Left cardiac atrium (tissue), 4 donors: ENCODE measurements at regions of chr11 and their contacts with region 1.

Region 1: GRCh38 chr11:117443266-117444195 is 115.9 kb downstream of the CEP164 start:
- DNase-seq: peak; percentile 65
- ATAC-seq: peak; percentile 89 to 92

Region 2: GRCh38 chr11:117621226-117621625 is 177.7 kb after region 1 on chr11:
- intact Hi-C with region 1: loop called in 1 of 2 experiments (anchors 10 kb)
- DNase-seq: no peak
- ATAC-seq: no peak

Region 3: DNA sequence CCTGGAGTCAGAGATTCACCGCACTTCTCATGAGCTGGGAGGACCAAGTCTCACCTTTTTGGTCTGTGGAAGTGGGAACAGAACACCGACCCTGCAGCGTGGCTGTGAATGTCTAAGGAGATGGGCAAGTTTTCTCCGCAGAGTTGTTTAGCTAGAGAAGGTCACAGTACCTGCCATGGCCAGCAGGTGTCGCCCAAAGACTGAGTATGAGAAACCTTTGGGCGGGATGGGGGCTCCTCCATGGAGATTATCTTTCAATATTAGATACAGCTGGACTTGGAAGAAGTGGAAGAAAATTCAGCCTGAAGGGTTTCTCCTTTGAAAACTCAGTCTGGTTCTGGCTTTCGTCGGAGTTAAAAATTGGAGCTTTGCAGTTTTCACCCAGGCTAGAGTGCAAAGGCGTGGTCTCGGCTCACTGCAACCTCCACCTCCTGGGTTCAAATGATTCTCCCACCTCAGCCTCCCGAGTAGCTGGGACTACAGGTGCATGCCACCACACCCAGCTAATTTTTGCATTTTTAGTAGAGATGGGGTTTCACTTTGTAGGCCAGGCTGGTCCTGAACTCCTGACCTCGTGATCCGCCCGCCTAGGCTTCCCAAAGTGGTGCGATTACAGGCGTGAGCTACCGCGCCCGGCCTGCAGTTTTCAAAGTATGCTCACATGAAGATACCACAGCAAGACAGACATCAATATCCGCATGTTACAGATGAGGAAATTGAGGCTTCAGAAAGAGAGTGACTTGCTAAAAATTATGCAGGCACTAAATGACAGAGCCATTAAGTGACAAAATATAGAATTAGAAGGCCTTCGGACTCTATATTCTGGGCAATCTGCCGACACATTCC is 364.2 kb after region 1 on chr11:
- intact Hi-C with region 1: loop called in 1 of 2 experiments (anchors 1 kb)
- DNase-seq: peak; percentile 81
- ATAC-seq: peak; percentile 39 to 56

Region 4: DNA sequence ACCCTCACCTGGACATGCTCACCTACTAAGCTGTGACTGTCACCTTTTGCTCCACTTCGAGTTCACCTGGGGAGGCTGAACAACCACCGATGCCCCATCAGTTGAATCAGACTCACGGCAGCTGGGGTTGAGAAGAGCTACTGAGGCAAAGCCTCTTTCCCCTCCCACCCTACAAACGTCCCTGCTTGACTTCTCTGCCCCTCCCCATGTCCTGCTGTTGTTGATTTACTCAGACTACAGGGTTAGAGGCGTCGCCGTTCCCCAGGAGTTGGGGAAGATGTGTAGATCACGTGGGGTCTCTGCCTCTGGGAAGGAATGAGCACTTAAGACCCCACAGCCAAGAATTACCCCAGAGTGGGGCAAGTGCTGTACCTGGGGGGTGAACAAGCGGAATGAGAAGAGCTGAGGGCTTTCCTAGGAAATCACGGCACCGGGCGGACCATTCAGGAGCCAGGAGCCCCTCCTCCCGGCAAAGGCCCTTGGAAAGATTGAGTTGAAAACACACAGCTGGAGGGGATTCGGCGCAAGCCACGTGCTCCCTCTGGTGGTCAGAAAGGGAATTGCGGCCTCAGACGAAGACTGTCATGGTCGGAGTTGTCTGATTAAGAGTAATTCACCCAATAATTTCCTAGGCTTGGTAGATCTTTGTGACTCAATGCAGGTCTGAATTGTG is 374.0 kb after region 1 on chr11:
- intact Hi-C with region 1: loop called in 1 of 2 experiments (anchors 5 kb)
- DNase-seq: peak; percentile 84
- ATAC-seq: peak; percentile 63 to 72